AG04449 (cell line): ENCODE measurements at regions of chr1 and their contacts with region 1.

Region 1: DNA sequence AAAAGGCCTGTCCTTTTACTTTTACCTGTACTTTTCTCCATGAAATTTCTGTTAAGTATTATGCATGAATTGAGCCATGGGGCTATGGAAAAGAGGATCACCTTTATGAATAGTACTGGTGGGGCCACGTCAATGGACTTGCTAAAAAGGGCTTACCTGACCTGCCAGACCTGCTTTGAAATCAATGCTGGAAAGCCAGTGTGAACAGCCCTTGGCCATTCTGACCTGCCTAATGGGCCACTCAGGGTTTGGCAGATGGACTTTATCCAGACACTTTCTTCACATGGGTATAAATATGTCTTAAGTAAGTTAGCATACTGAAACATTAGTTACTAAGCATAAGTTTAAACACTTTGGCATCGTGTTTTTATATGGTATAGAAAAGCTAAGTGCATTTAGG is 8.3 kb upstream of the GUK1 start:
- DNase-seq: no peak
- H3K4me3 ChIP-seq: no peak overlapping the region
- CTCF ChIP-seq: no peak

Region 2: DNA sequence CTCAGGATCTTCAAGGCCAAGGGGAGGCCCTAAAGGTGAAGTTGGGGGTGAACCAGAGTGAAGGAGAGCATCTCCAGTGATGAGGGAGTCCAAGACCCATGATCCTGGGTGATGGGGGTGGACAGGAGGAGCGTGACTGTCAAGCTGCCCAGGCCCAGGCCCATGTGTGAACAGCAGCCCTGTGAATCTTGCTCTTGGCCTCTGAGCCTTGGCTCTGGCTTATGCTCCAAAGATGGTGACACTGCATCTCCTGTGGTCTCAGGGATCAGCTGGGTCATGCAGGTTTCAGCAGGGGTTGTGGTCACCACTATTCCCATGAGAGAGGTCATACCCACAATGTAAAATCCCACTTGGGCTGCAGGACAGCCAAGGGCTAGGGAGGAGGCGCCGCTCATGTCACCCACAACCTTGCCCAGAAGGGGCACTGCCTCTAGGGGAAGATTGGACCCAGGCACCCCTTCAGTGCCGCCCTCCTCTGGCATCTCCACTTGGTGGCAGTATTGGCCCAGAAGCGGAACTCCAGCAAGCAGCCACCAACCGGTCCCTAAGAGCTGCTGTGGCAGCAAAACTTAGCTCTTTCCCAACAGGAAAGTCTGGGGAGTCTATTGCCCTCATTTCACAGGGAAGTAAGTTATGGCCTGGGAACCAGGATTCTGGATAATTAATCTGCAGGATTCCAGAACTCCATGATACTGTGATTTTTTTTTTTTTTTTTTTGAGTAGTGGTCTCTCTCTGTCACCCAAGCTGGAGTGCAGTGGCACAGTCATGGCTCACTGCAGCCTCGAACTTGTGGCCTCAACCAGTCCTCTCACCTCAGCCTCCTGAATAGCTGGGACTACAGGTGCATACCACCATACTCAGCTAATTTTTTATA is 132.5 kb before region 1 on chr1:
- CTCF ChIA-PET with region 1: interaction called, 15 read pairs
- POLR2A ChIA-PET with region 1: no interaction called
- DNase-seq: no peak
- H3K4me3 ChIP-seq: no peak overlapping the region
- CTCF ChIP-seq: peak; percentile 86

Region 3: GRCh38 chr1:228059634-228060457 is 71.9 kb before region 1 on chr1:
- CTCF ChIA-PET with region 1: no interaction called
- POLR2A ChIA-PET with region 1: no interaction called
- DNase-seq: no peak
- H3K4me3 ChIP-seq: no peak overlapping the region; the same call in 1 of the 2 replicates
- CTCF ChIP-seq: no peak

Region 4: DNA sequence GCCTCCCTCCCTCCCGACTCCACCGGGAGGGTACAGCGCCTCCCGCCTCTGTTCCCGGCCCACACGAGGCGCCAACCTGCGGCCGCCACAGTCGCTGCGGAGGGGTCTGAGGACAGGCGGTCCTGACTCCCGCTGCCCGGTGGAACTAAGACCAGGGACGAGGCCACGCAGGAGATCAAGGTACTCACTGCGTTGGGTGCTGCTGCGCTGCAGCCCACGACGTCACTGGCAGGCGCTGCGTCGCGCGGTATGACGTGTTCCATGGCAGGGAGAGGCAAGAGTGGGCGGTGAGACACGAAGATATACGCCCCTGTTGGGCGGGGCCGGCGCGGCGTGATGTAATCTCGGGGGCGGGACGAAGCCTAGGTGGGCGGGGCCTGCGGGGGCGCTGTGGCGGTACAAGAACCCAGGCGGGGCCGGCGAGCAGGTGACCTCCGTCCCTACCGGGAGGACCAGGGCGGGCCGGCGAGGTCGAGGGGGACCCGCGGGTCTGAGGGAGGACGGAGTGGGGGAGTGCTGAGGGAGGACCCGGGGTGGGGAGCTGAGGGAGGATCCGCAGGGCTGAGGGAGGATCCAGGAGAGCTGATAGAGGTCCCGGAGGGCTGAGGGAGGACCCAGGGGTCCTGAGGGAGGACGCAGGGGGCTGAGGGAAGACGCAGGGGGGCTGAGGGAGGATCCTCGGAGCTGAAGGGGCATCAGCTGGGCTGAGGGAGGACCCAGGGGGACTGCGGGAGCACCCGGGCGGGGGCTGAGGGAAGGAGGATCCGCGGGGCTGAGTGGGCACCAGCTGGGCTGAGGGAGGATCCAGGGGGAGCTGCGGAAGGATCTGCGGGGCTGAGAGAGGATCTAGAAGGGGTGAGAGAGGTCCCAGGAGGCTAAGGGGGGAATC is 22.4 kb before region 1 on chr1 and contains the start of gene MRPL55:
- CTCF ChIA-PET with region 1: interaction called, 22 read pairs
- POLR2A ChIA-PET with region 1: no interaction called
- DNase-seq: no peak
- H3K4me3 ChIP-seq: peak within 1 kb of the TSS; percentile 99
- CTCF ChIP-seq: peak; percentile 22

Region 5: DNA sequence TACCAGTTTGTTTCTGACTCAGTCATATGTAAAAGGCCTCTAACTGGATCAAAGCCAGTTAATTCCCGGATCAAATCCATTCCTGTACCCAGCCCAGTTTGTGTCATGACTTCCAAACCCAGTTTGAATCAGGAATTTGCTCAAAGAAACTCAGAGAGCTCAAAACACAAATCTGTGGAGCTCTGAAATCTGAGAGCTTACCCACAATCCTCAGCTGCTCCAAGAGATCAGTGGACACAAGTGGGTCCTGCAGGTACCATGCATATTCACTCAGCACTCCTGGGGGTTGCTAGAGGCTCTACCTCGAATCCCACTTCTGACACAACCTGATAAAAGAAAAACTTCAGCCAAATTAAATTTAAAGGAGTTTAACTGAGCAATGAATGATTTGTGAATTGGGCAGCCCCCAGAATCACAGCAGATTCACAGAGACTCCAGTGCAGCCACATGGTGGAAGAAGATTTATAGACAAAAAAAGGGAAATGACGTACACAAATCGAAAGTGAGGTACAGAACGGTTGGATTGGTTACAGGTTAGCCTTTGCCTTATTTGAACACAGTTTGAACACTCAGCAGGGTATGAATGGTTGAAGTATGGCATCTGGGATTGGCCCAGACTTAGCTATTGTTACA is 10.8 kb before region 1 on chr1:
- CTCF ChIA-PET with region 1: interaction called, 58 read pairs
- POLR2A ChIA-PET with region 1: no interaction called
- DNase-seq: no peak
- H3K4me3 ChIP-seq: no peak overlapping the region
- CTCF ChIP-seq: no peak

Region 6: DNA sequence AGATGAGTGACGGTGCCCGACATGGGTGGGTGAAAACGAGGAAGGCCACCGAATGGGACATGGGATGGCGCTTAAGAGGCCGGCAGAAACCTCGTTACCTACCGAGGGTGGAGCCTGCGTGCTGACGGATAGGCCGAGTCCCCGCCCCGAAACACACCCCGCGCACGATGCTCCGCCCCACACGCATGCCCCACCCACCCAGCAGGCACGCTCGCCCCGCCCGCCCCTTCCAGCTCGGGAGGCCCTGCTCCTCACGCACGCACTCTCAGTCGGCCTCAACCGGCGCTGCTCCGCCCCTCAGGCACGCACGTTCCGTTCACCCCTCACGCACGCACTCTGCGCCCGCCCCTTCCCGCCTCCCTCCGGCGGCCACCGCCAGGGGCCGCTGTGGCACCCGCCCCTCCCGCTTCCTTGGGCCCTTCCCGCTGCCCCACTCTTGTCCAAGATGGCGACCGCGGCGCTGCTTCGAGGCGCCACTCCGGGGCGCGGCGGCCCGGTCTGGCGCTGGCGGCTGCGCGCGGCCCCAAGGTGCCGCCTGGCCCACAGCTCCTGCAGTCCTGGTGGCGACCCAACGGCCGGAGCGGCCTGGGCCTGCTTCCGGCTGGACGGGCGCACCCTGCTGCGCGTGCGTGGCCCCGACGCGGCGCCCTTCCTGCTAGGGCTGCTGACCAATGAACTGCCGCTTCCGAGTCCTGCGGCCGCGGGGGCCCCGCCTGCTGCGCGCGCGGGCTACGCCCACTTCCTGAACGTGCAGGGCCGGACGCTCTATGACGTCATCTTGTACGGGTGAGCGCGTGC is 33.8 kb after region 1 on chr1 and contains the start of gene IBA57:
- CTCF ChIA-PET with region 1: interaction called, 29 read pairs
- POLR2A ChIA-PET with region 1: no interaction called
- DNase-seq: peak; percentile 91
- H3K4me3 ChIP-seq: peak within 1 kb of the TSS; percentile 73
- CTCF ChIP-seq: peak; percentile 99

Region 7: GRCh38 chr1:228198977-228199590 is 67.3 kb after region 1 on chr1:
- CTCF ChIA-PET with region 1: no interaction called
- POLR2A ChIA-PET with region 1: no interaction called
- DNase-seq: no peak
- H3K4me3 ChIP-seq: no peak overlapping the region
- CTCF ChIP-seq: no peak

Region 8: GRCh38 chr1:228500901-228501871 is 369.4 kb after region 1 on chr1:
- CTCF ChIA-PET with region 1: interaction called, 14 read pairs
- POLR2A ChIA-PET with region 1: no interaction called
- DNase-seq: no peak
- H3K4me3 ChIP-seq: peak overlapping the region; percentile 33
- CTCF ChIP-seq: peak; percentile 92

Region 9: GRCh38 chr1:228515200-228515834 is 383.6 kb after region 1 on chr1:
- CTCF ChIA-PET with region 1: interaction called, 69 read pairs
- POLR2A ChIA-PET with region 1: no interaction called
- DNase-seq: no peak
- H3K4me3 ChIP-seq: no peak overlapping the region
- CTCF ChIP-seq: peak; percentile 57